Activated CD4-positive, alpha-beta T cell treated with anti-CD3 and anti-CD28 coated beads for 36 hours (primary cell): ENCODE measurements at regions of chr5 and their contacts with region 1.

Region 1: DNA sequence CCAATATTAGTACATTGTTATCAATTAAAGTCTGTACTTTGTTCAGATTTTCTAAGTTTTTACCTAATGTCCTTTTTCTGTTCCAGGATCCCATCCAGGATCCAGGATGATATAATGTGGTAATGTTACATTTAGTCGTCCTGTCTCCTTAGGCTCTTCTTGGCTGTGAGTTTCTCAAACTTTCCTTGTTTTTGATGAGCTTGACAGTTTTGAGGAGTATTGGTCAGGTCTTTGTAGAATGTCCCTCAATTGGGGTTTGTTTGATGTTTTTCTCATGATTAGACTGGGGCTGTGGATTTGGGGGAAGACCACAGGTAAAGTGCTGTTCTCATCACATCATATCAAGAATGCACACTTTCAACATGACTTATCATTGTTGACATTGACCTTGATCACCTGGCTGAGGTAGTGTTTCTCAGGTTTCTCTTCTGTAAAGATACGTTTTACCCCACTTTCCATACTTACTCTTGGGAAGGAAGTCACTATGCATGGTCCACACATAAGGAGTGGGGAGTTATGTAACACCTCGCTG is 9.6 kb downstream of the NDFIP1 start:
- DNase-seq: no peak
- ATAC-seq: peak; percentile 65
- H3K4me3 Mint-ChIP-seq: peak overlapping the region; percentile 24
- H3K27ac Mint-ChIP-seq: peak overlapping the region; percentile 79
- H3K4me1 Mint-ChIP-seq: peaks cover 80% of the 10 kb centered on the region
- H3K27me3 Mint-ChIP-seq: no peaks in the 10 kb centered on the region

Region 2: GRCh38 chr5:142128675-142129208 is 10.5 kb after region 1 on chr5:
- CTCF ChIA-PET with region 1: interaction called, 5 read pairs
- POLR2A ChIA-PET with region 1: no interaction called
- intact Hi-C with region 1: loop called in 1 of 2 experiments (anchors 2 kb)
- DNase-seq: no peak
- ATAC-seq: peak; percentile 59
- H3K4me3 Mint-ChIP-seq: no peak overlapping the region
- H3K27ac Mint-ChIP-seq: peak overlapping the region; percentile 70
- H3K4me1 Mint-ChIP-seq: peaks cover 57% of the 10 kb centered on the region
- H3K27me3 Mint-ChIP-seq: no peaks in the 10 kb centered on the region

Region 3: DNA sequence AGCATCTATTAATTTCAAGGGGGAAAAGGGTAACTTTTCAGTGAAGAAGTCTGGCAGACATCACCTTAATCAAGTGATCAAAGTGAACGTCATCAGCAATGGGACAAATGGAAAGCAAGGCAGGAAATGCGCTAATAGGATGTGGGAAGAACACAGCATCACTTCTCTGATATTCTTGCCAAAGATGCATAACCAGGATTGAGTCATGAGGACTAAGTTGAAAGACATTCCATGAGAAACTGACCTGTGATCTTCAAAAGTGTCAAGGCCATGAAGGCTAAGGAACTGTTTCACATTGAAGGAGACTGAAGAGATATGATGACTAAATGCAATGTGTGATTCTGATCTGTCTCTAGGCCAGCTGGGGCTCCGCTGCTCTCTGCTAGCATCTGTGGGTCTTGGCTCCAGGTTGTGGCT is 83.3 kb after region 1 on chr5:
- CTCF ChIA-PET with region 1: no interaction called
- POLR2A ChIA-PET with region 1: no interaction called
- intact Hi-C with region 1: no loop called
- DNase-seq: no peak
- ATAC-seq: no peak
- H3K4me3 Mint-ChIP-seq: no peak overlapping the region
- H3K27ac Mint-ChIP-seq: no peak overlapping the region
- H3K4me1 Mint-ChIP-seq: no peaks in the 10 kb centered on the region
- H3K27me3 Mint-ChIP-seq: peaks cover 3% of the 10 kb centered on the region

Region 4: GRCh38 chr5:142296914-142297417 is 178.7 kb after region 1 on chr5:
- CTCF ChIA-PET with region 1: no interaction called
- POLR2A ChIA-PET with region 1: no interaction called
- intact Hi-C with region 1: no loop called
- DNase-seq: no peak
- ATAC-seq: no peak
- H3K4me3 Mint-ChIP-seq: no peak overlapping the region
- H3K27ac Mint-ChIP-seq: no peak overlapping the region
- H3K4me1 Mint-ChIP-seq: peaks cover 7% of the 10 kb centered on the region
- H3K27me3 Mint-ChIP-seq: no peaks in the 10 kb centered on the region